ENCODE measurements at regions of chr2 and their contacts with region 1.

Region 1: DNA sequence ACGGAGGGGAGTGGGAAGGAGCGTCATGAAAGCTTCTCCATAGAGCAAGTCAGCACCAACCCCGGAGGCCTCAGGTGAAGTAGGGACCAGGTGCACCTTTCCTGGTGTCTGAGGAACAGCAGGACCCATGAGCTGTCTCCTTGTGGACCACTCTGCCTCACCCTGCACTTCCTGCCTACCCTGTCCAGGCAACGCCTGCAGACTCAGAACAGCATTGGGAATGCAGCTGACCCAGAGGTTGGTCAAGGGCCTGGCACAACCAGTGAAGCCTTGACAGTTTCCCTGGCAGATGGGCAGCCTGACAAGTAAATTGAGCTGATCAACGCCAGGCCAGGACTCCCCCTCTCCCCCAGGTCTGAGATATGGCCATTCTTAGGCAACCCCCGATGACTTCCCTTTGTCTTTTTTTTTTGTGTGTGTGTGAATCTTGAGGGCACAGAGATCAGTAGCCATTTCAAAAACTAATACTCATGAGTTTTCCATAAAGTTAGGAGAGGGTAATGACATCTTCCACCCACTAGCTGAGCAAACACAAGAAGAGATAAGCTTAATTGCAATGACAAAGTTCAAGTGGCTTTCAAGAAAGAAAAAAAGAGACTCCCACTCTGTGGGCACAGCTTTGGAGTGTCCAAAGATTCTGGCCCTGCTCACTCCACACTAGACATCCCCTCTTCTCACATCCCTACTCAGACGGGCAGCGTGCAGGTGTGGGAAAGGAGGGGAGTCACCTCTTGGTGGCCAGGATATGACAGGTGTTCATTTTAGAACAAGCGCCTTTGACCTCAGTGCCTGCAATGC is 3.5 kb upstream of the FABP1 start:
- DNase-seq: peak; percentile 75
- ATAC-seq: peak; percentile 22
- H3K4me3 ChIP-seq: peak overlapping the region in 1 of 3 experiments; percentile 18; a peak in 1 of 6 replicates
- H3K27ac ChIP-seq: peak overlapping the region; percentile 75
- H3K4me1 ChIP-seq: peaks cover 89% of the 10 kb centered on the region
- H3K27me3 ChIP-seq: no peaks in the 10 kb centered on the region; a peak in 1 of 5 replicates
- CTCF ChIP-seq: no peak
- EP300 ChIP-seq: peak in 1 of 2 experiments; percentile 95; a peak in 2 of 4 replicates
- POLR2A ChIP-seq: no peak
- RAD21 ChIP-seq: no peak

Region 2: DNA sequence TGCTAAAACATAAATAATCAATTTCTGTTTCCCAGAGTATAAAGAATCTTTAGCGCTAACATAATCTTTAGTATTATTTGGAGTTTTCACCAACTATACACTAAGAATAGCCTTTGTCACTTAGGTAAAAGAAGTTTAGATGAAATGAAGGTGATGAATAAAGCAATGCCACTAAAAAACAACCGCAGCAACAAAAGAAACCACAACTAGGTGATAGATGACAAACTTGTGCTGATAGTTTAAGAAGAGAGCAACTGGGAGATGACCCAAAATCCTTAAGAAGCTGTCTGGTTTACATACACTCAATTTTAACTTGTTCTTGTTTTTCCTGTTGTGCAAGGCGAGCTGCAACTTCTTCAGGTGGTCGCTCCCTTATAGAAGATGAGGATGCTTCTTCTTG is 1961.0 kb before region 1 on chr2:
- CTCF ChIA-PET with region 1: no interaction called
- POLR2A ChIA-PET with region 1: no interaction called
- in situ Hi-C with region 1: no loop called
- intact Hi-C with region 1: no loop called
- DNase-seq: no peak
- ATAC-seq: no peak
- H3K4me3 ChIP-seq: no peak overlapping the region
- H3K27ac ChIP-seq: no peak overlapping the region
- H3K4me1 ChIP-seq: no peaks in the 10 kb centered on the region
- H3K27me3 ChIP-seq: no peaks in the 10 kb centered on the region
- CTCF ChIP-seq: no peak
- EP300 ChIP-seq: no peak
- POLR2A ChIP-seq: no peak
- RAD21 ChIP-seq: no peak

Region 3: DNA sequence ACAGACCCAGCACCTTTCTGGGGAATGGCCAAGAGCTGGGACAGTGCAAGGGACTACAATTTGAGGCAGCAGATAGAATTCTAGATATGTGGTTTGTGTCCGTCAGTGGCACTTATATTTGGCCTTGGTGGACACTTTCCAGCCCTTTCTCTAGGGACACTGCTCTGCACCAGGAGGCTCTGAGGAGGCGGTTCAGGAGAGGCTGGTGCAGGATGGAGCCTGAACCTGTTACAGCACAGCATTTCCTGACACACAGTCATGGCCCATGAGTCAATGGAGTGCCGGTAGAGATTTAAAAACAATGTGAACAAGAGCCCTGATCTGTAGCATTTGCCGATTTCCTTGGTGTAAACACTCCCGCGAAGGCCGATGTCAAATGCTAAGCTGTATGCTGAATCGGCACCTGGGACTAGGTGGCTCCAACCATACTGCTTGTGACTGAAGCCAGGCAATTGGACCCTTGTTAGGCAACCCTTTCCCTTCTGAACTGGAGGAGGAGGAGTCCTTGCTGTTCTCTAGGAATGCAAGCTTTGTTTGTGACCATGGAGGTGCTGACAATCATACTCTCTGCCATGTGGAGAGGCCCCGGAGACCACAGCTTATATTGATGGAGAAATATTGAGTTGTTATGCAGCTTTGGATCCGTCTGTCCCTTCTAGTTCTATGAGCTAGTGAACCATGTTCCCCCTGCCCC is 15.4 kb before region 1 on chr2:
- CTCF ChIA-PET with region 1: no interaction called
- POLR2A ChIA-PET with region 1: interaction called, 12 read pairs
- in situ Hi-C with region 1: no loop called
- intact Hi-C with region 1: no loop called
- DNase-seq: peak; percentile 31
- ATAC-seq: peak; percentile 78
- H3K4me3 ChIP-seq: no peak overlapping the region
- H3K27ac ChIP-seq: no peak overlapping the region
- H3K4me1 ChIP-seq: peaks cover 29% of the 10 kb centered on the region
- H3K27me3 ChIP-seq: peaks cover 0 to 8% of the 10 kb centered on the region in 2 experiments; a peak in 2 of 5 replicates
- CTCF ChIP-seq: no peak
- EP300 ChIP-seq: no peak
- POLR2A ChIP-seq: no peak
- RAD21 ChIP-seq: no peak

Region 4: DNA sequence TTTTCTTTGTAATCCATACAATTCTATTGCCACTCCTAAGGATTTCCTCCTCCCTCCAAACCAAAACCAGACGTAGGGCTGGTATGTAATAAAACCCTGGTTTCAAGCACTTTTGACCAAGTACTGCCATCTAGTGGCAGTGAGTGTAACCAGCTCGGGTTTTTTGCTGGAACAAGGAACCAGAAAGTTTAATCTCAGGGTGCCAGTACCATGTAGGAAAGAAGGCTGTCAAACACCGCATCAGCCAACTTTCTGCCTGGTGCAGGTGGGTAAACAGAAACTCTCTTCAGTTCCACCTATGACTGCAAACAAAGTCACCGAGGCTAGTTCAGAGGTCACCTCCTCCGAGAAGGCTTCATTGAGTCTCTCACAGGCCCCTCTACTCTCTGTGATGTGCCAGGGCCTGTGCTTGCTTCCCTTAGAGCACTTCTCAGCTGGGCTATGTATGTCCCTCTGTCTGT is 28.6 kb after region 1 on chr2:
- CTCF ChIA-PET with region 1: no interaction called
- POLR2A ChIA-PET with region 1: interaction called, 9 read pairs
- in situ Hi-C with region 1: no loop called
- intact Hi-C with region 1: loop called (anchors 1 kb)
- DNase-seq: peak; percentile 82
- ATAC-seq: peak; percentile 85
- H3K4me3 ChIP-seq: peak overlapping the region in 1 of 3 experiments; percentile 35; a peak in 1 of 6 replicates
- H3K27ac ChIP-seq: no peak overlapping the region
- H3K4me1 ChIP-seq: peaks cover 40% of the 10 kb centered on the region
- H3K27me3 ChIP-seq: 0 out of 5 replicates have a peak, but pooled peaks cover 0 to 11% of the 10 kb centered on the region in 2 experiments
- CTCF ChIP-seq: peak; percentile 97
- EP300 ChIP-seq: no peak
- POLR2A ChIP-seq: no peak
- RAD21 ChIP-seq: peak; percentile 97